PC-9 (cell line): ENCODE measurements at regions of chr1 and their contacts with region 1.

Region 1: DNA sequence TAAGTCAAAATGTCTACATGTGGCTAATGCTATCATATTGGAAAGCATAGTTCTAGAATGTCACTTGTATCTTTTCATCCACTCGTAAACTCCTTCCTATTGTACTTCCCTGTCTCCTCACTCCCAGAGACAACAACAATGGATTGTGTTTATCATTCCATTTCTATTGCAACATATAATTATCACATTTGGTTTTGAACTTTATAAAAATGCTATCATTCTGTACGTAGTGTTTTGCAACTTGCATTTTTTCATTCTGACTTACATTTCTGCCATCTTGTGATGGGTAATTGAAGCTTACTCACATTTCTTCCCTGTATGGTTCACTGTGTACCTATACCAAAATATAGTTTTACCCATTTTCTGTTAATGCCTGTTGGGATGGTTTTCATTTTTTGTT is 14.5 kb upstream of the CSF3R start:
- DNase-seq: peak in 1 of 2 experiments; percentile 88
- H3K4me3 ChIP-seq: no peak overlapping the region
- H3K27ac ChIP-seq: peak overlapping the region; percentile 62
- H3K4me1 ChIP-seq: peaks cover 16% of the 10 kb centered on the region
- H3K27me3 ChIP-seq: no peaks in the 10 kb centered on the region
- CTCF ChIP-seq: no peak

Region 2: DNA sequence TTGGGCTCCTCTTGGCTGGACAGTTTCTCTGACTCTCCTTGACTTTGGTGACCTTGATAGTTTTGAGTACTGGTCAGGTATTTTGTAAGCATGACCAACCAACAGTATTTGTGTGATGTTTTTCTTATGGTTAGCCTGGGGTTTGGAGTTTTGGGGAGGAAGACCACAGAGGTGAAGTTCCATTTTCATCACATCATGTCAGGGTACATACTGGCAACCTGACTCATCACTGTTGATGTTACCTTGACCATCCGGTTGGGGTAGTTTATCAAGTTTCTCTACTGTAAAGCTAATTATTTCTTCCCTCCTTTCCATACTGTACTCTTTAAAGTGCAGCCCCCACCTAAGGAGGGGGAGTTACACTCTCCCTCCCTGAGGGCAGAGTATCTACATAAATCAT is 60.4 kb before region 1 on chr1:
- CTCF ChIA-PET with region 1: no interaction called
- POLR2A ChIA-PET with region 1: no interaction called
- intact Hi-C with region 1: no loop called
- DNase-seq: peak; percentile 74 to 98
- H3K4me3 ChIP-seq: no peak overlapping the region
- H3K27ac ChIP-seq: peak overlapping the region; percentile 100
- H3K4me1 ChIP-seq: peaks cover 33% of the 10 kb centered on the region
- H3K27me3 ChIP-seq: no peaks in the 10 kb centered on the region
- CTCF ChIP-seq: no peak

Region 3: DNA sequence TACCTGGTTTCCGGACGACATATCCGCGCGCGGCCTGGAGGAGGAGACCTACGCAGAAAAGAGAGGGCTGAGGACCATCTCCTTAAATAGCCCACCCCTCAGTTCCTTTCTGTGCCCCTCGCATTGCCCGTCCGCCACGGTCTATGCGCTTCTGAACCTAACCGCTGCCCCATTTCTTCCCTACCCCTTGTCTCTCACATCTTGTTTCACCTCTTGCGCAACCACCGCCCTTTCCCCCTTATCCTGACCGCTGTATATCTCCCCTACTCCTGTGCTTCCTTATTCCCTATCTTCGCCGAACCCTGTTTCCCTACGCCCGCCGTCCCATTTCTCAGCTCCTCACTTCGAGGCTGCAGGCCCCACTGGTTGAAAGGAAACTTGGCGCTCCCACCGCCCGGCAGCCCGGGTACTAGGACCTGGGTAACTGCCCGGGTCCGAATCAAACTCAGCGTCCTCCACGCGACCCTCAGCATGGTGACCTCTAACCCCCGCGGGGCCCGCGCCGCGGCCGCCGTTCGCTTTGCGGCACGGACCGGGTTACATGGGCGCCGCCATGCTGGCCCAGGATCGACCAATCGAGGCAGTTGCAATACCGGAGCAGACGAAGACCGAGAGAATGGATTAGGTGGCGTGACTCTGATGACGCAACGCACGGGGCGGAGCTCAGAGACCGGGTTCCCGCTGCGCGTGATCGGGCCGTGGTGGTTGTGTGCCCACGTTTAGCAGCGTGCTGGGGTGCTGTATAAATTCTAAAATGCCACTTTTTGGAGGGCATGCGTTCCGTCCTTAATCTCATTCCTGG is 33.2 kb before region 1 on chr1 and contains the start of gene MRPS15:
- CTCF ChIA-PET with region 1: interaction called, 14 read pairs
- POLR2A ChIA-PET with region 1: interaction called, 4 read pairs
- intact Hi-C with region 1: no loop called
- DNase-seq: peak; percentile 89 to 95
- H3K4me3 ChIP-seq: peak within 1 kb of the TSS; percentile 96
- H3K27ac ChIP-seq: peak within 1 kb of the TSS; percentile 93
- H3K4me1 ChIP-seq: peaks cover 33% of the 10 kb centered on the region
- H3K27me3 ChIP-seq: no peaks in the 10 kb centered on the region
- CTCF ChIP-seq: no peak
- total RNA-seq, gene MRPS15: 138 and 200 TPM in 2 replicates

Region 4: GRCh38 chr1:36542962-36543515 is 45.8 kb after region 1 on chr1:
- CTCF ChIA-PET with region 1: no interaction called
- POLR2A ChIA-PET with region 1: no interaction called
- intact Hi-C with region 1: no loop called
- DNase-seq: no peak
- H3K4me3 ChIP-seq: no peak overlapping the region
- H3K27ac ChIP-seq: no peak overlapping the region
- H3K4me1 ChIP-seq: no peaks in the 10 kb centered on the region
- H3K27me3 ChIP-seq: peaks cover 30% of the 10 kb centered on the region; the same call in 1 of the 2 replicates
- CTCF ChIP-seq: peak; percentile 51

Region 5: DNA sequence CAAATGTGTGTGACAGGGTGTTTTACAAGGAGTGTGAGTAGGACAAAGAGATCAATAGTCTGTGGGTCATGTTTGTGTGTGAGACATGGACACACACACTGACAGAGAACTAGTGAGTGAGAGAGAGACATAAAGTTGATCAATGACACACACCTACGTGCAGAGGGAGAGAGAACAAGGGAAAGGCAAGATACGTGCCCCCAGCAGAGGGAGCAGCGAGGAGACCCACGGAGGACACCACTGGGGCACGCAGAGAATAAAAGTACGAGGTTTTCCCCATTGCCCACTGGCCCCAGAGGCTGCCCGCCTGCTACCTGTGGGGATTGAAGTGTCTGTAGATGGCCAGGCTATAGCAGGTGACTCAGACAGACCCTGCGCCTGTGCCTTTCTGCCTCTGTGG is 115.7 kb after region 1 on chr1:
- CTCF ChIA-PET with region 1: no interaction called
- POLR2A ChIA-PET with region 1: no interaction called
- intact Hi-C with region 1: no loop called
- DNase-seq: no peak
- H3K4me3 ChIP-seq: no peak overlapping the region
- H3K27ac ChIP-seq: no peak overlapping the region
- H3K4me1 ChIP-seq: no peaks in the 10 kb centered on the region
- H3K27me3 ChIP-seq: peaks cover 66% of the 10 kb centered on the region
- CTCF ChIP-seq: no peak